ENCODE measurements at regions of chr3 and their contacts with region 1.

Region 1: GRCh38 chr3:5026331-5027218 is 47.3 kb downstream of the BHLHE40 start:
- DNase-seq: peak; percentile 86
- H3K4me3 Mint-ChIP-seq: peak overlapping the region; percentile 74
- H3K27ac Mint-ChIP-seq: peak overlapping the region; percentile 80
- H3K4me1 Mint-ChIP-seq: peaks cover 38% of the 10 kb centered on the region
- H3K27me3 Mint-ChIP-seq: no peaks in the 10 kb centered on the region

Region 2: DNA sequence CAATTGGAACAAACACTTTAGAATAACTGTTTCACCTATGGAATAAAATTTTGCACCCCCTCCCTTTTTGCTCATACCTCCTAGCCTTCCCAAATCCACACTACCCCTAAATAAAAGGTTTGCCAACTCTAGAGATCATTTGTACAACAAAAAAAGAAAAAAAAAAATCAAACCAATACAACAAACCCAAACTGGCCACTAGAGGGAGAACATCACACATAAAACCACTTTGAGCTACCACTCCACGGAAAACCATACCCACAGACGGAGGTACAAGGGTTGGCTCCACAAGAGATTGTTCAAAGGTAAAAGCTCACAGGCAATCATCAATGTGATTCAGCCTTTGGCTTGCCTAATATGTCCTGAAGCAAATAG is 675.8 kb before region 1 on chr3:
- CTCF ChIA-PET with region 1: no interaction called
- intact Hi-C with region 1: loop called (anchors 1 kb)
- DNase-seq: peak; percentile 59
- H3K4me3 Mint-ChIP-seq: peak overlapping the region; percentile 42
- H3K27ac Mint-ChIP-seq: peak overlapping the region; percentile 54
- H3K4me1 Mint-ChIP-seq: peaks cover 17% of the 10 kb centered on the region
- H3K27me3 Mint-ChIP-seq: no peaks in the 10 kb centered on the region

Region 3: GRCh38 chr3:4776980-4777581 is 249.5 kb before region 1 on chr3:
- CTCF ChIA-PET with region 1: no interaction called
- intact Hi-C with region 1: loop called (anchors 1 kb)
- DNase-seq: peak; percentile 42
- H3K4me3 Mint-ChIP-seq: peak overlapping the region; percentile 33
- H3K27ac Mint-ChIP-seq: peak overlapping the region; percentile 89
- H3K4me1 Mint-ChIP-seq: peaks cover 34% of the 10 kb centered on the region
- H3K27me3 Mint-ChIP-seq: no peaks in the 10 kb centered on the region

Region 4: DNA sequence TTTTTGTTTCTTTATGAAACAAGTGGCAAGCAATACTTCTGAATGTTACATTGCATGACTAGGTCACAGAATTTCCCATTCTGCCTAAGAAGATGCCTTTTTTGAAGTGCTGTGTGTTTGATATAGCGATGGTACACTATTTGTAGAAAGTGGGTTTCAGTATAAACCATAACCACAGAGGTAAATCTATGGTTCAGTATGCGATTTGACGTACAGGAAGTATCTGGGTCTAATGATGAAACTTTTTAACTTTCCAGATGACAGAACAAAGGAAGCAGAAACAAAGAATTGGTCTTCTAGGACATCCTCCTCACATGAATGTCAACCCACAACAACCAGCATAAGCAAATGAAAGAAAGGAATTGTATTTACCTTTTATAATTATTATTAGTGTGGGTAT is 180.7 kb before region 1 on chr3:
- CTCF ChIA-PET with region 1: interaction called, 8 read pairs
- intact Hi-C with region 1: loop called (anchors 1 kb)
- DNase-seq: no peak
- H3K4me3 Mint-ChIP-seq: no peak overlapping the region
- H3K27ac Mint-ChIP-seq: peak overlapping the region; percentile 93
- H3K4me1 Mint-ChIP-seq: peaks cover 94% of the 10 kb centered on the region
- H3K27me3 Mint-ChIP-seq: no peaks in the 10 kb centered on the region

Region 5: DNA sequence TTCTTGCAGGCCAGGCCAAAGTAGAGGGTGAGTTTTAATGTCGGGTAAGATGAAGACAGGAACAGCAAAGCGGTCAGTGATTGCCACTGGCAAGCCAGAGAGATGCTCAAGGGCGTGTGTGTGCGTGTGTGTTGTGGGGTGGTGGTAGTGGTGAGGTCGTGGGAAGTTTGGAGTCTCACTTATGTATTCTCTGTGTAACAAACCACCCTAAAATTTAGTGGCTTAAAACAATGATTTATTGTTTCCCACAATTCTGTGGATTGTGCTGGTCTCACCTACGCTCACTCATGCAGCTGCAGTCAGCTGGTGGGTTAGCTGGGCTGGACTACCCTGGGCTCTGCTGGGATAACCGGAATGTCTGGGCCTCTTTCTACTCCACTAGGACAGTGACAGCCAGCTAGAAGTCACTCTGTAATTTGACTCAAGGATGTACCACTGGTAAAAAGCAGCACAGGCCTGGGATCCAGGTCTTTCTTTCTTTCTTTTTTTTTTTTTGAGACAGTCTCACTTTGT is 98.2 kb before region 1 on chr3:
- CTCF ChIA-PET with region 1: no interaction called
- intact Hi-C with region 1: no loop called
- DNase-seq: no peak
- H3K4me3 Mint-ChIP-seq: no peak overlapping the region
- H3K27ac Mint-ChIP-seq: no peak overlapping the region
- H3K4me1 Mint-ChIP-seq: peaks cover 18% of the 10 kb centered on the region
- H3K27me3 Mint-ChIP-seq: no peaks in the 10 kb centered on the region

Region 6: GRCh38 chr3:4950351-4950784 is 76.2 kb before region 1 on chr3:
- CTCF ChIA-PET with region 1: no interaction called
- intact Hi-C with region 1: no loop called
- DNase-seq: no peak
- H3K4me3 Mint-ChIP-seq: no peak overlapping the region
- H3K27ac Mint-ChIP-seq: no peak overlapping the region
- H3K4me1 Mint-ChIP-seq: no peaks in the 10 kb centered on the region
- H3K27me3 Mint-ChIP-seq: no peaks in the 10 kb centered on the region

Region 7: GRCh38 chr3:4986782-4987537 is 39.6 kb before region 1 on chr3:
- CTCF ChIA-PET with region 1: interaction called, 24 read pairs
- intact Hi-C with region 1: loop called (anchors 1 kb)
- DNase-seq: peak; percentile 80
- H3K4me3 Mint-ChIP-seq: peak overlapping the region; percentile 71
- H3K27ac Mint-ChIP-seq: peak overlapping the region; percentile 65
- H3K4me1 Mint-ChIP-seq: peaks cover 55% of the 10 kb centered on the region
- H3K27me3 Mint-ChIP-seq: no peaks in the 10 kb centered on the region

Region 8: DNA sequence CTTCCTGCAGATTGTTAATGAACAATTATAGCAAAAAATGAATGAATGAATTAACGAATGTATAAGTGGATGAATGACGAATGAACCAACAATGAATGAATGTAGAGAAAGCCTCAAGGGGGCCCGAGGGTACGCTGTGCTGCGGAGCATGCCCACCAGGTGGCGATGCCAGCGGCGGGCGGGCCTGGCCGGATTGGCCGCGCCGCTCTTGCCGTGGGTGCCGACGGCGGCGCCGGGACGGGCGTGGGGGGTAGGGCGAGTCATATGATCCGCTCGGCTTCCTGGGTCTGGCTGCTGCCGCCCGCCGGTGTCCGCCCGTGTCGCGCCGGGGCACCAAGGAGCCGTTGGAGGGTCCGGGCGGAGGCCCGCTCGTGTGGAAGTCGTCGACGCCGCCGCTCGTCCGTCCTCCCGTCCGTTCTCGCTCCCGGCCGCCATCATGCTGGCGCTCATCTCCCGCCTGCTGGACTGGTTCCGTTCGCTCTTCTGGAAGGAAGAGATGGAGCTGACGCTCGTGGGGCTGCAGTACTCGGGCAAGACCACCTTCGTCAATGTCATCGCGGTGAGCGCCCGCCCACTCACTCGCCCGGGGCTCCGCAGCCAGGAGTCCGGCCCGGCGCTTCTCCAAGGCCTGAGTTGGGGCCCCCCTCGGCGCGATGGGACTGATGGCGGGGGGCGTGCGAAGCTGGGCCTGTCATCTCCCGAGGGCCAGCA is 95.6 kb after region 1 on chr3 and contains the start of gene ARL8B:
- CTCF ChIA-PET with region 1: interaction called, 4 read pairs
- intact Hi-C with region 1: loop called (anchors 2 kb)
- DNase-seq: peak; percentile 94
- H3K4me3 Mint-ChIP-seq: peak within 1 kb of the TSS; percentile 90
- H3K27ac Mint-ChIP-seq: peak within 1 kb of the TSS; percentile 90
- H3K4me1 Mint-ChIP-seq: peaks cover 39% of the 10 kb centered on the region
- H3K27me3 Mint-ChIP-seq: no peaks in the 10 kb centered on the region
- total RNA-seq, gene ARL8B: 38.4 to 39.3 TPM